ENCODE measurements at regions of chr2 and their contacts with region 1.

Region 1: GRCh38 chr2:59677158-59677557 is 876.3 kb downstream of the BCL11A start:
- DNase-seq: no peak
- ATAC-seq: no peak
- H3K4me3 ChIP-seq: no peak overlapping the region
- H3K27ac ChIP-seq: no peak overlapping the region
- H3K4me1 ChIP-seq: no peaks in the 10 kb centered on the region
- H3K27me3 ChIP-seq: no peaks in the 10 kb centered on the region
- CTCF ChIP-seq: no peak
- POLR2A ChIP-seq: no peak

Region 2: DNA sequence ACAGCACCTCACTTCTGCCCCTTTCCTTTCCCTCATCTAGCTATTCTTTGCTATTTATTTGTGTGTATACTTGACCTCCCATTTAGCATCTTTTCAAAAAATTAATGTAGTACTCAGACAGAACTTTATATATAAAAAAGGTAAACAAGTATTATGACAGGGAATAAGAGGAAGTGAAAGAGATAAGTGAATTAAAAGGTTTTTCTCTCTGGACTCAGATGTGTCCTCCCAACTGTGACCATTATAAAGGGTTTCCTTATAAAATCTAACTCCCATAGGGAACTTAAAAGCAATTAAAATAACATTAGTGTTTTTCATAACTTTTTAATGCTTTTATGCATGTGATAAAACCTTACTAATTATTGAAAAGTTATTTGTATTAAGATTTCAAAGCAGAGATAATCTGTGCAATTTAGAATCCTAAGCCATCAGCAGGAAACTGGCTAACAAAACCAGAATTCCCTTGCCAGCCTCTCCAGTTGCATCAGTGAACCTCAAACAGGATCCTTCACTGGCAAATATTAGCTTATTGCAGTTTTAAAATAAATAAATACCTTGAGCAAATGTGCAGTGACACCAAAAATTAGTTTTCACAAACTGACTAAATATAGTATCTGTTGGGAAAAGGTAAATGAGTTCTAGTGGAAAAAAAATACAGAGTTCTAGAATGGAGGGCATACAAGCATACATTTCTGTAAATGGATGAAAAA is 54.4 kb before region 1 on chr2:
- intact Hi-C with region 1: loop called in 1 of 10 experiments (anchors 5 kb)
- DNase-seq: no peak
- ATAC-seq: no peak
- H3K4me3 ChIP-seq: no peak overlapping the region
- H3K27ac ChIP-seq: no peak overlapping the region
- H3K4me1 ChIP-seq: peaks cover 0 to 5% (median 0%) of the 10 kb centered on the region in 12 donors
- H3K27me3 ChIP-seq: no peaks in the 10 kb centered on the region
- CTCF ChIP-seq: no peak
- POLR2A ChIP-seq: no peak

Region 3: DNA sequence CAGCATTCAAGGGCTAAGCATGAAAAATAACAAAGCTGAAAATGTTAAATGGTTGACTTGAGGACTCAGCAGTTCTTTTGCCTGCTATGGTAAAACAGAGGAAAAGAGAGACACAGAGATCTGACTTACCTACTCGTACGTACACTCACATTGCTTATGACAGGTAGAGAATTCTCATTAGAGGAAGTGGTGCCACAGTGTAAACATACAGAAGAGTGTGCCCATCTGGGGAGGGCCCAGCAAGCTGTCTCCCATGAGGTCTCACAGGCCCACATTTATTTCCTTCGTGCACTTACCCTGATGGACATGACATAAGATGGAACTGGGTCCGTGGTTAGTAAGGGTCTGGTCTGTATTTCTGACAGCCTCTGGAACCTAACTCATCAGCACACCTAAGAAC is 147.2 kb after region 1 on chr2:
- intact Hi-C with region 1: no loop called
- DNase-seq: no peak
- ATAC-seq: no peak
- H3K4me3 ChIP-seq: no peak overlapping the region
- H3K27ac ChIP-seq: no peak overlapping the region
- H3K4me1 ChIP-seq: no peaks in the 10 kb centered on the region
- H3K27me3 ChIP-seq: no peaks in the 10 kb centered on the region
- CTCF ChIP-seq: no peak
- POLR2A ChIP-seq: no peak

Region 4: DNA sequence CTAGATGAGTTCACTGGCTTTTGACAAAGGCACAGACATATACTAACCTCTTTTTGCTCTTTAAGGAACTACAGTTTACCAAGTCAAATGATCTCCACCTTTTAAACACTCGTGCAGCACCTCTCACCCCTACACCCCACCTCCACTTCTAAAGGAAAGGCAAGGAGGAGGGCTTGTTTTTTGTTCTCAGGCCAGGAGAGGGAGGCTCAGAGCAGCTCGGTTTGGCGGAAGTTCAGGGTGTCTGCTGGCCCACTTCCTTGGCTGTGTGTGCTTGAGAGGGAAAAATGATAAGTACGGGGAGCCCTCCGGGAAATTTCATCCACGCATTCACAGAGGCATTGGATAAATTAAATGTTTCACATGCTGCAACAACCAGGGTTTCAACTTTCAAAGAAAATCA is 208.4 kb after region 1 on chr2:
- intact Hi-C with region 1: no loop called
- DNase-seq: peak in 2 of 5 donors; percentile 33 to 35
- ATAC-seq: peak in 3 of 4 donors; percentile 47 to 66 (median 61)
- H3K4me3 ChIP-seq: no peak overlapping the region
- H3K27ac ChIP-seq: no peak overlapping the region
- H3K4me1 ChIP-seq: peaks cover 0 to 8% (median 0%) of the 10 kb centered on the region in 12 donors
- H3K27me3 ChIP-seq: no peaks in the 10 kb centered on the region
- CTCF ChIP-seq: peak in 3 of 12 donors; percentile 6 to 23 (median 7)
- POLR2A ChIP-seq: no peak